Activated CD4-positive, alpha-beta T cell treated with anti-CD3 and anti-CD28 coated beads for 36 hours (primary cell): ENCODE measurements at regions of chr1 and their contacts with region 1.

Region 1: GRCh38 chr1:226827968-226828513 is 42.4 kb upstream of the PSEN2 start:
- DNase-seq: peak; percentile 99
- ATAC-seq: peak; percentile 99
- H3K4me3 Mint-ChIP-seq: peak overlapping the region; percentile 44
- H3K27ac Mint-ChIP-seq: peak overlapping the region; percentile 94
- H3K4me1 Mint-ChIP-seq: peaks cover 41% of the 10 kb centered on the region
- H3K27me3 Mint-ChIP-seq: no peaks in the 10 kb centered on the region

Region 2: GRCh38 chr1:226547754-226548191 is 280.3 kb before region 1 on chr1:
- CTCF ChIA-PET with region 1: interaction called, 6 read pairs
- POLR2A ChIA-PET with region 1: no interaction called
- intact Hi-C with region 1: loop called in 1 of 2 experiments (anchors 5 kb)
- DNase-seq: peak; percentile 82
- ATAC-seq: peak; percentile 70
- H3K4me3 Mint-ChIP-seq: no peak overlapping the region
- H3K27ac Mint-ChIP-seq: no peak overlapping the region
- H3K4me1 Mint-ChIP-seq: peaks cover 14% of the 10 kb centered on the region
- H3K27me3 Mint-ChIP-seq: peaks cover 38% of the 10 kb centered on the region

Region 3: GRCh38 chr1:226687426-226687825 is 140.6 kb before region 1 on chr1:
- CTCF ChIA-PET with region 1: interaction called, 5 read pairs
- POLR2A ChIA-PET with region 1: no interaction called
- intact Hi-C with region 1: loop called (anchors 1 to 5 kb)
- DNase-seq: peak; percentile 75
- ATAC-seq: peak; percentile 36
- H3K4me3 Mint-ChIP-seq: no peak overlapping the region
- H3K27ac Mint-ChIP-seq: peak overlapping the region; percentile 100
- H3K4me1 Mint-ChIP-seq: peaks cover 100% of the 10 kb centered on the region
- H3K27me3 Mint-ChIP-seq: no peaks in the 10 kb centered on the region

Region 4: DNA sequence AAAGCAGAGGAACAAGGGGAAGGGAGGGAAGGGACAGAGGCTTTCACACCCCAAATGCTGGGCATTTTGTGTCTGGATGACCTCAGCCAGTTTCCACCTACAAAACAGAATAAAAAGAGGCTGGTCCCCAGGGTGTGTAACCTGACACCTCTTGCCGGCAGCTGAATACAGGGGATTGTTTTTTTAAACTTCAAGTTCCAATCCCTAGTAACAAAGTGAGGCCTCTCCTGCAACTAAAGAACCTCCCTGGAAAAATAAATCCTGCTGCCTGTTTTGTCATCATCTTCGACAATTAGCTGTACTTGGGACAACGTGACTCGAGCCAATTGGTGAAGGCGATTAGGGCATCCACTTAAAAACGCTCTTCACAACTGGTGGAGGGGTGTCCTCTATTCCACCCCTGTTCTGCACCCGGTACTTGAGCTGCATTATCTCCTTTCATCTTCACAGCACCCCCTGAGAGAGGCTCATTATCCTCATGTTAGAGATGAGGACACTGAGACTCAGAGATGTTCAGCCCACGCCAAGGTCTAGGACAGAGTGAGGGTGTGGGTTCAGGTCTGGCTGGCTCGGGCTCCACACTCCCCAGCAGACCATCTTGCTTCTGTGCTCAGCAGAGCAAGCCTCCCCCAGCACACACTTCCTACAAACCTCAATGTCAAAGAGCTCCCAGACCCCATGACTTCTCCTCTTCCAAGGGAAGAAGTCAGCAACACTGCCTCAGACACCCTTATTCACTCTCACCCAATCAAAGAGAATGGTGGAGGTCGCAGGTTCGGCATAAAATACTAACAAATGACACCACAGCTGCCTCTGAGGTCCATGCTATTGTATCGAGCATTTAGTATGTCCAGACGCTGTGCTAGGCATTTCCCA is 104.1 kb before region 1 on chr1:
- CTCF ChIA-PET with region 1: no interaction called
- POLR2A ChIA-PET with region 1: no interaction called
- intact Hi-C with region 1: loop called in 1 of 2 experiments (anchors 2 kb)
- DNase-seq: no peak
- ATAC-seq: peak; percentile 24
- H3K4me3 Mint-ChIP-seq: peak overlapping the region; percentile 88
- H3K27ac Mint-ChIP-seq: peak overlapping the region; percentile 97
- H3K4me1 Mint-ChIP-seq: peaks cover 92% of the 10 kb centered on the region
- H3K27me3 Mint-ChIP-seq: no peaks in the 10 kb centered on the region

Region 5: DNA sequence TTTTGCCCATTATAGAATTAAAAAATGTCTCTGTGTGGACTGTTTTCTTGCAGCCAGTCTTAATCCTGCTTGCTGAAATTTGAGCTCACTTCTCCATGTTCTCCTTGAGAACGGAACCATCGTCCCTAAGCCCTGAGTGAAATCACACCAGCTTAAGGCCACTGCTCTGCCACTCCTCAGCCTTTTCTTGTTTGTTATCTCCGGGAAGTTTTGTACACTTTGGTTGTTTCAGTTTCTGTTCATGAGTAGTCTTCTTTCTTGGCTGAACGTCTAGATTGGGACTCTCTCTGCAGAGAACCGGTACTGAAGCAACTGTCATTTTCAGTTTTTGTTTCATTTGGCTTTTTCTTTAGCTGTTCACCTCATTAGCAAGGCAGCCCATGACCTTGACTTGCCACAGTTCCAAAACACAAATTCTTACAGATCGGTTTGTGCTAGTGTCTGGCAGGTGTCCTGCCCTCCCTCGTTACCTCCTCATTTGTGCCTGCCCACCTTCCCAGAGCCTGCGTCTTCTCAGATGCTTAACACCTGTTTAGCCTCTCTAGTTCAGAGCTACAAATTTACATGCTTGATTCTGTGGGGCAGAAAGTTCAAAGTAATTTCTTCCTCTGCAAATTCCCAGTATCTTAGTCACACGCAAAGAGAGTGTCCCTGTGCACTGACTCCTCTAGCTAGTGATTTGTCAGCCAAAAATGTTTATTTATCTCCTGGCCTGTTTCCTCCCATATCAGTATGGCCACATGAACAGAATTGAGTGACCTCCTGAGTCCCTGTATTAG is 54.8 kb after region 1 on chr1:
- CTCF ChIA-PET with region 1: interaction called, 3 read pairs
- POLR2A ChIA-PET with region 1: no interaction called
- intact Hi-C with region 1: loop called in 1 of 2 experiments (anchors 2 kb)
- DNase-seq: peak; percentile 54
- ATAC-seq: peak; percentile 92
- H3K4me3 Mint-ChIP-seq: peak overlapping the region; percentile 64
- H3K27ac Mint-ChIP-seq: peak overlapping the region; percentile 91
- H3K4me1 Mint-ChIP-seq: peaks cover 53% of the 10 kb centered on the region
- H3K27me3 Mint-ChIP-seq: no peaks in the 10 kb centered on the region

Region 6: DNA sequence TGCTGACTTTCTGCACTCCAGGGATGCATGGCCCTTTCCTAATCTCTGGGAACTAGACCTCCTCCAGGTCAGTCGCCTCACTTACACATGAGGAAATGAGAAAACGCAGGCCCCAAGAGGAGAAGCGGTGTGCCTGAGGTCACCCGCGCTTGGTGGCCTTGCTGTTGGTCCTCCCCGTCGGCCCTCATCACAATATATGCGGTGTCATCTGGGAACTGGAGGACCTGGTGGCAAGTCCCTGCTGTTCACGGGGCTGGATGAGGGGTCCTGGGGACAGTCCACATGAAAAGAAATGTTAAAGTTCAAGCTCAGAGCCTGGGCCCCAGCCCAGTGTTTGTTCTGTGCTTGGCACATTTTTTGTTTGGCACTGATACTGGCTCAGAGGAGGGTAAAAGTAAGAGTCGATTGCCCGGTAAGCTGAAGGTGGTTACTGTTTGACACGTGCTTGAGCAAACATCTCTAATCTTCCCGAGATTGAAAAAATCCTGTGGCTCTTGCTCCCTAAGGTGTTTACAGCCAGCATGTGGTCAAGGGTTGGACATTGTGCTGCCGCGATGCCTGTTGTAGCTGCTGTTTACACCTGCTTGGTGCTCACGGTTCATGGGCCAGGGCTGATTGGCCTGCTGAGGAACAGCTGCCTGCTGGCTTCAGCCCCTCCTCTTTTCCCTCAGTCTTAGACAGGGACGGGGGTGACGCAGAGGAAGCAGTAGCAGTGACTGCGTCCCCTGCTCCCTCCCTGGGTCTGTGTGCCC is 117.2 kb after region 1 on chr1:
- CTCF ChIA-PET with region 1: no interaction called
- POLR2A ChIA-PET with region 1: no interaction called
- intact Hi-C with region 1: no loop called
- DNase-seq: no peak
- ATAC-seq: no peak
- H3K4me3 Mint-ChIP-seq: no peak overlapping the region
- H3K27ac Mint-ChIP-seq: no peak overlapping the region
- H3K4me1 Mint-ChIP-seq: peaks cover 47% of the 10 kb centered on the region
- H3K27me3 Mint-ChIP-seq: no peaks in the 10 kb centered on the region